ENCODE measurements at regions of chr17 and their contacts with region 1.

Region 1: DNA sequence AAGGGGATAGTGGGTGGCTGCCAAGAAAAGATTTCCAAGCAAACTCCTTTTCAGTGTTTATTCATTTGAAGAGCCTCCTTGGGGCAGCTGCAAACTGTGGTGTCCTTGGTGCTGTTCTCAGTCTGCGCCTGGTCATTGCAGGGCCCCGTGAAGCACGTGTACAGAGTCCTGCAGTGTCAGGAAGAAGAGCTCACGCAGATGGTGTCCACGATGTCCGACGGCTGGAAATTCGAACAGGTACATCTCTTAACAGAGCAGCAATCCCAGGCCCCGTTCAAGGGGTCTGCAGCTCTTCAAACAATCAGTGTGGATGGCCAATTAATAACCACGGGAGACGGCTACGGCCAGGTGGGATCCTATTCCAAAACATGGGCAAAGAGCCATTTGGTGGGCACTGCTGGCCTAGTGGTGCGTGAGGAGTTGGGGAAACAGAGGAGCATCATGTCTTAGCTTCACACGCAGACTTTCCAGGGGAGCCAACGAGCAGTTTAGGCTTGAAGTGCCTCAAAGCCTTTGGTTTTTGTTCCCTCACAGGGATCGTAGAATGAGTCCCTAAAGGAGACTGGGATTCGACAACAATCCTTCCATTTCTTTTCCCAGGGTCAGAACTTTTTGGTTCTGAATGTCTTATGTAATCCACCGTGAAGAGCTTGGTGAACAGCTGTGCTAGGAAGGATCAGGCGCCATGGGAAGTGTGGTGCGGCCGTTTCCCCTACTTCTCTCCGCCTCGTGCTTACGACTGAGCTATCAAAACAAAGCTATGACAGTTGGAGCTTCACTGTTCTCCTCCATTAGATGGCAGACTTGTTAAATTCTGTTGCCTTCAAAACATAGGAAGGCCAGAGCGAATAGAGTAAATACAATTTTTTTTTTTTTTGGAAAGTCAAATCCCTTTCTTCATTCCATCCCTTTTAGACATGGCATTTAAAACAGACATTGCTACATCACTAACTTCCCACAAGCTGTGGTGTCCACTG is 12.6 kb downstream of the KCTD2 start:
- DNase-seq: no peak
- H3K4me3 ChIP-seq: no peak overlapping the region
- H3K27ac ChIP-seq: no peak overlapping the region
- H3K4me1 ChIP-seq: no peaks in the 10 kb centered on the region
- H3K27me3 ChIP-seq: no peaks in the 10 kb centered on the region
- CTCF ChIP-seq: peak in 2 of 3 experiments; percentile 27; a peak in 2 of 4 replicates
- EP300 ChIP-seq: no peak
- POLR2A ChIP-seq: no peak
- RAD21 ChIP-seq: peak; percentile 13 to 38; a peak in 2 of 4 replicates

Region 2: DNA sequence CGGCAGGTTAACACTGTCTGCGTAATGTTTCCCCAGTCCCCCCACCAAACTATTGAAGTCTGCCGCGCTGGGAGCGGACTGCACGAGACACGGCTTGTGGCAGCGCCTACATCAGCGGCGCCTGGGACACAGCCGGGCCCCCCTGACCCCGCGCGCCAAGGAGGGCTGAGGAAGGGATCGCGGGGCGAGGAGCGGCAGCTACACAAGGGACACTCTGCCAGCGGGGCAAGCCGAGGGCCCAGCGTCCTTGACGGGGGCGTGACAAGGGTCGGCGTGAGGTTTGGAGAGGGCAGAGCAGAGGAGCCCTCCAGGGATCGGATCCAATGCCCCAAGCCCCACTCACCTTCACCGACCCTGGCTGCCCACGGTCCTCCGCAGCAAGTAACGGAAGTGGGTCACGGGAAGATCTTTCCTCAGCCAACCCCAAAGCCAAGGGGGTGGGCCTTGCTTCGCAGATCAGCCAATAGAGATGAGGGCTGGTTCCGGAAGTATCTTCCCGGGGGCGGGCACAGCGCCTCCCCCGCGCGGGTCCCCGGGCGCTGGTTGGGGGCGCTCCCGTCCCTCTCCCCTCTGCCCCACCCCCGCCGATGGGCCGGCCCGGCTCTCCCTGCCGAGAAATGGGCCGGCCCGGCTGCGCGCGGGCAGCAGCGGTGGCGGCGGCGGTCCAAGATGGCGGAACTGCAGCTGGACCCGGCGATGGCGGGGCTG is 12.9 kb before region 1 on chr17 and contains the starts of genes ATP5PD and KCTD2:
- CTCF ChIA-PET with region 1: interaction called, 19 read pairs
- POLR2A ChIA-PET with region 1: interaction called, 6 read pairs
- DNase-seq: peak; percentile 86 to 94
- H3K4me3 ChIP-seq: peak within 1 kb of the TSS; percentile 86 to 98 (median 97)
- H3K27ac ChIP-seq: peak within 1 kb of the TSS; percentile 75; the same call in 1 of the 2 replicates
- H3K4me1 ChIP-seq: peaks cover 4 to 20% (median 4%) of the 10 kb centered on the region in 4 experiments; a peak in 6 of 7 replicates
- H3K27me3 ChIP-seq: no peaks in the 10 kb centered on the region
- CTCF ChIP-seq: no peak
- EP300 ChIP-seq: peak in 1 of 2 experiments; percentile 99; a peak in 2 of 3 replicates
- POLR2A ChIP-seq: peak; percentile 56 to 84
- RAD21 ChIP-seq: no peak
- total RNA-seq, gene ATP5PD: 326 and 335 TPM in 2 replicates
- total RNA-seq, gene KCTD2: 33.7 and 34.1 TPM in 2 replicates

Region 3: GRCh38 chr17:75069783-75070182 is 10.1 kb after region 1 on chr17:
- CTCF ChIA-PET with region 1: interaction called, 20 read pairs
- POLR2A ChIA-PET with region 1: interaction called, 4 read pairs
- DNase-seq: no peak
- H3K4me3 ChIP-seq: no peak overlapping the region
- H3K27ac ChIP-seq: no peak overlapping the region
- H3K4me1 ChIP-seq: no peaks in the 10 kb centered on the region; a peak in 1 of 7 replicates
- H3K27me3 ChIP-seq: no peaks in the 10 kb centered on the region
- CTCF ChIP-seq: peak in 2 of 3 experiments; percentile 6 to 7; a peak in 2 of 4 replicates
- EP300 ChIP-seq: no peak
- POLR2A ChIP-seq: no peak
- RAD21 ChIP-seq: no peak

Region 4: GRCh38 chr17:75077496-75078283 is 18.0 kb after region 1 on chr17:
- CTCF ChIA-PET with region 1: interaction called, 19 read pairs
- POLR2A ChIA-PET with region 1: interaction called, 25 read pairs
- DNase-seq: no peak
- H3K4me3 ChIP-seq: peak overlapping the region in 1 of 4 experiments; percentile 6; a peak in 1 of 8 replicates
- H3K27ac ChIP-seq: no peak overlapping the region
- H3K4me1 ChIP-seq: peaks cover 0 to 16% (median 8%) of the 10 kb centered on the region in 4 experiments; a peak in 6 of 7 replicates
- H3K27me3 ChIP-seq: no peaks in the 10 kb centered on the region
- CTCF ChIP-seq: peak in 2 of 3 experiments; percentile 4; a peak in 1 of 4 replicates
- EP300 ChIP-seq: no peak
- POLR2A ChIP-seq: no peak
- RAD21 ChIP-seq: no peak; a peak in 1 of 4 replicates

Region 5: DNA sequence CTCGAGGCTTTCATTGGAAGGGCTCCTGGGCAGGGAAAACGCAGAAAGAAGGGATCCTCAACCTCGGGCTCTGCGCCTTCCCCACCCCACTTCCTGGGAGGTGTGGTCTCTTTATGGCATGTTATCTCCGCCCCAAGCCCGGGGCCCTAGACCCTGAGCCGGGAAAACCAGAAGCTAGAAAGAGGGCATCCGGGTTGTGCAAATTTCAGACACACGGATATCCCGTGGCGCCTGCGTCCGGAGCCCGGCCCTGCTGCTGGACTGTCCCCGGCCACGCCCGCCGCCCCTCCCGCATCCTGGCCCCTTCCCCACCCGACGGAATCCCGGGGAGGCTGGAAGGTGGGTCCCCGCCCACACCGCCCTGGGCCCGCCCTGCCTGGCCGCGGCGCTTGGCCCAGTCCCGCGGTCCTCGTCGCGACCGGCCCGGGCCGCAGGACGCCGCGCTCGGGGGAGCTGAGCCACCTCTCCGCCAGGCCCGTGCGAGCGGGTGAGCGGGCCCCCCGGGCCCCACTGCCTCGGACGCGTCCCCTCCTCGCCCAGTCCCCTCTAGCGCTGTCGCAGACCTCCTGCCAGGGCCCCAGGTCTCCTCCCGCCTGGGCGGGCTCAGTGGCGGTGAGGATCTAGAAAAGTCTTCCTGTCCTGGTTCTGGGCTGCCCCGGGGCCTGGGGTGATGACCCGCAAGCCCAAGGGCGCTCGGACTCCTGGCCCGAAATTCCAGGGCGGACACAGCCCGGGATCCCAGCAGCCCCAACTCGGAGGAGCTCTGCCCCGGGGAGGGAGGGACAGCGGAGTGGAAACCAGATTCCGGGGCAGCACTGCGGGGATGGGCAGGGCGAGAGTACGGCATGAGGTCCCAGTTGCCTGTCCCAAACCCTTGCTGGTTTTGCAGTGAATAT is 28.1 kb after region 1 on chr17 and contains the start of gene SLC16A5:
- CTCF ChIA-PET with region 1: interaction called, 47 read pairs
- POLR2A ChIA-PET with region 1: interaction called, 5 read pairs
- DNase-seq: peak; percentile 75 to 95
- H3K4me3 ChIP-seq: peak within 1 kb of the TSS; percentile 73 to 82 (median 77)
- H3K27ac ChIP-seq: peak within 1 kb of the TSS; percentile 71
- H3K4me1 ChIP-seq: peaks cover 3 to 33% (median 26%) of the 10 kb centered on the region in 4 experiments
- H3K27me3 ChIP-seq: no peaks in the 10 kb centered on the region
- CTCF ChIP-seq: no peak
- EP300 ChIP-seq: no peak
- POLR2A ChIP-seq: peak in 1 of 2 experiments; percentile 75; a peak in 2 of 3 replicates
- RAD21 ChIP-seq: 0 out of 4 replicates have a peak, but pooled peaks of 1 of the 2 experiments have one; percentile 3
- total RNA-seq, gene SLC16A5: 16.6 and 17.1 TPM in 2 replicates

Region 6: DNA sequence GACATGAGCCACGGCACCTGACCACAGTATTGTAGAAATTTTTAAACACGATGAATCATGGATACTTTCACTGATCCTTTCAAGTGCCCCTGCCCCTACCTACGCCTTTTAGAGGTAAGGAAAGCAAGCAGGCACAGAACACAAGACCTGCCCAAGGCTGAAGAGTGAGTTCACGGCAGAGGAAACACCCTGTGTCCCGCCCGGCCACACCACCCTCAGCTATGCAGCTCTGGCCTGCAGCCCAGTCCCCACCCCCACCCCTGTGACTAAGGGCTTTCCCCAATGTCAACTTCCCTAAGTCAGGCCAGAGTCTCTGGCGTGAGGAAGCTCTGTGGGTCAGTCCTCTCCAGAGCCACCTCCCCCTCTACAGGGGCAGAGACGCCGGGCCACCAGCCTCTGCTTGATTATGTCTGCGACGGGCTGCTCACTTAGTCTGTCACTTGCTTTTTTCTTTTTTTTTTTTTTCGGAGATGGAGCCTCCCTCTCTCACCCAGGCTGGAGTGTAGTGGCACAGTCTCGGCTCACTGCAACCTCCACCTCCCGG is 36.5 kb after region 1 on chr17:
- CTCF ChIA-PET with region 1: interaction called, 47 read pairs
- POLR2A ChIA-PET with region 1: interaction called, 4 read pairs
- DNase-seq: no peak
- H3K4me3 ChIP-seq: no peak overlapping the region
- H3K27ac ChIP-seq: no peak overlapping the region
- H3K4me1 ChIP-seq: peaks cover 0 to 13% (median 8%) of the 10 kb centered on the region in 4 experiments; a peak in 6 of 7 replicates
- H3K27me3 ChIP-seq: no peaks in the 10 kb centered on the region
- CTCF ChIP-seq: no peak
- EP300 ChIP-seq: no peak
- POLR2A ChIP-seq: no peak
- RAD21 ChIP-seq: no peak

Region 7: GRCh38 chr17:75131280-75132017 is 71.8 kb after region 1 on chr17 and contains the start of gene NT5C:
- CTCF ChIA-PET with region 1: interaction called, 20 read pairs
- POLR2A ChIA-PET with region 1: interaction called, 3 read pairs
- DNase-seq: peak; percentile 58 to 91
- H3K4me3 ChIP-seq: peak within 1 kb of the TSS; percentile 69 to 95 (median 74)
- H3K27ac ChIP-seq: peak within 1 kb of the TSS; percentile 81
- H3K4me1 ChIP-seq: peaks cover 0 to 5% (median 4%) of the 10 kb centered on the region in 4 experiments; a peak in 5 of 7 replicates
- H3K27me3 ChIP-seq: no peaks in the 10 kb centered on the region
- CTCF ChIP-seq: peak; percentile 65 to 72 (median 68)
- EP300 ChIP-seq: no peak
- POLR2A ChIP-seq: peak; percentile 72 to 75; a peak in 2 of 3 replicates
- RAD21 ChIP-seq: peak; percentile 32 to 42; a peak in 2 of 4 replicates
- total RNA-seq, gene NT5C: 52.1 and 66.9 TPM in 2 replicates

Measured in H1 (cell line).